H1 (cell line): ENCODE measurements at regions of chr17 and their contacts with region 1.

Region 1: GRCh38 chr17:71460943-71461342 is 659.9 kb upstream of the SOX9 start:
- DNase-seq: peak in 1 of 2 experiments; percentile 52
- H3K4me3 ChIP-seq: no peak overlapping the region
- H3K27ac ChIP-seq: no peak overlapping the region
- H3K4me1 ChIP-seq: peaks cover 0 to 5% (median 1%) of the 10 kb centered on the region in 4 experiments; a peak in 1 of 7 replicates
- H3K27me3 ChIP-seq: no peaks in the 10 kb centered on the region
- CTCF ChIP-seq: peak in 2 of 3 experiments; percentile 36 to 49; a peak in 2 of 4 replicates
- EP300 ChIP-seq: no peak
- POLR2A ChIP-seq: no peak
- RAD21 ChIP-seq: peak; percentile 40 to 55; a peak in 3 of 4 replicates

Region 2: DNA sequence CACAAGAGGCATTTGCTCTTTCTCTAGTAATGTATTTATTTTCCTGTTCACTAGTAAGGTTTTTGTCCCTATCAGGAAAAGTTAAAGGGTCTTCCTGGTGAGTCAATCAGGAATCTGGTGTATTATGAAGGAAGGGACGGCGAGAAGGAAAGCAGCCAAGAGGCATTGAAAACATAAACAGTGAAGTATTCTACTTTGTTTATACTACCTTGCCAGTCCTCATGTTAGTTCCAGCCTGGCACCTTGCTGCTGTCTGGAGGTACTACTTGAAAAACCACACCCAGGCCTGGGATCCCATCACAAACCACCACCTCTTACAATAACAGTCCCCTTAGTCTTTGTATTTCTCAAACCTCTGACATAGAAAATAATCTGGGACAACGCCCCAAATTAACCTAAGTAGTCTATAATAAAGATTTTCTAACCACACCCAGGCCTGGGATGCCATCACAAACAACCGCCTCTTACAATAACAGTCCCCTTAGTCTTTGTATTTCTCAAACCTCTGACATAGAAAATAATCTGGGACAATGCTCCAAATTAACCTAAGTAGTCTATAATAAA is 16.9 kb before region 1 on chr17:
- CTCF ChIA-PET with region 1: interaction called, 18 read pairs
- POLR2A ChIA-PET with region 1: no interaction called
- DNase-seq: no peak
- H3K4me3 ChIP-seq: no peak overlapping the region
- H3K27ac ChIP-seq: no peak overlapping the region
- H3K4me1 ChIP-seq: no peaks in the 10 kb centered on the region
- H3K27me3 ChIP-seq: no peaks in the 10 kb centered on the region
- CTCF ChIP-seq: no peak
- EP300 ChIP-seq: no peak
- POLR2A ChIP-seq: no peak
- RAD21 ChIP-seq: no peak

Region 3: GRCh38 chr17:71472809-71473789 is 12.2 kb after region 1 on chr17:
- CTCF ChIA-PET with region 1: interaction called, 19 read pairs
- POLR2A ChIA-PET with region 1: no interaction called
- DNase-seq: peak in 1 of 2 experiments; percentile 7
- H3K4me3 ChIP-seq: no peak overlapping the region
- H3K27ac ChIP-seq: no peak overlapping the region
- H3K4me1 ChIP-seq: no peaks in the 10 kb centered on the region
- H3K27me3 ChIP-seq: no peaks in the 10 kb centered on the region
- CTCF ChIP-seq: peak in 2 of 3 experiments; percentile 70 to 74; a peak in 3 of 4 replicates
- EP300 ChIP-seq: no peak
- POLR2A ChIP-seq: no peak
- RAD21 ChIP-seq: peak; percentile 87 to 88

Region 4: GRCh38 chr17:71535026-71535720 is 74.2 kb after region 1 on chr17:
- CTCF ChIA-PET with region 1: no interaction called
- POLR2A ChIA-PET with region 1: no interaction called
- DNase-seq: no peak
- H3K4me3 ChIP-seq: no peak overlapping the region
- H3K27ac ChIP-seq: no peak overlapping the region
- H3K4me1 ChIP-seq: no peaks in the 10 kb centered on the region
- H3K27me3 ChIP-seq: no peaks in the 10 kb centered on the region
- CTCF ChIP-seq: no peak
- EP300 ChIP-seq: no peak
- POLR2A ChIP-seq: no peak
- RAD21 ChIP-seq: no peak